ENCODE measurements at regions of chr10 and their contacts with region 1.

Region 1: DNA sequence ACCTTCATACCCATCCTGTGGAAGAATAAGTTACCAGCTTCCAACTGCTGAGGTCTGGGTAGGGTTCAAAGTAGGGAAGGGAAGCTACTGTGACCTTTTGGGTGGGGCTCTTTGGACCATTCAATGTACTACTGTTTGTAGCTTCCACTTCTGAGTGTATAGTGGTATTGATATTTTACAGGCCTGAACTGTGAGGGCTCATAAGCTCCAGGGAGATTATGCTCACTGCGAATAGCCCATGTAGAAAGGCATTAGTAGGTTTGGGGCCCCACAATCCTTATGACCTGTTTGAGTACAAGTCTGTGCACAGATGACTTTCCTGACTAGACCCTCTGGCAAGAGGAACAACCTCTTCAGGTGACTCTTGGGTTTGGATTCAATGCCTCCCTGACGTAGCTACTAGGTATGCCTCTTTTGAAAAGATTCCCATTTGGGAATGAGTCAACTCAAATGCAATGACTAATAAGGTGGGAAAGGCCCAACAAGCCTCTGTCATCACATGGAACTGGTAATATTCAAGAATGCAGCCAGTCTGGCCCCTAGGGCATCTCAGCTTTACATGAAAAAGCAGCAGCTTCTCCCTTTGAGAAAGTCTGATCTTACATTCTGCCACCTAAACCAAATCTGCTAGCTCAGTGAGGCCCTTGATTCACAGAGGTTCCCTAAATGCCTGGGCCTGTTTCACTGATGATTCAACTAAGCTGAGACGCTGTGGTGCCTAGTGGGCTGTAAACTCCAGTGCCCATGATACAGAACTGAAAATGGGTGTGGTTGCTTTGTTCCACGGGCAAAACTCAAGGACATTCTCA is 79.8 kb downstream of the ABI1 start:
- H3K4me3 Mint-ChIP-seq: no peak overlapping the region
- H3K27ac Mint-ChIP-seq: peak overlapping the region; percentile 88
- H3K4me1 Mint-ChIP-seq: peaks cover 63% of the 10 kb centered on the region
- H3K27me3 Mint-ChIP-seq: no peaks in the 10 kb centered on the region

Region 2: GRCh38 chr10:26737730-26738129 is 43.3 kb before region 1 on chr10:
- intact Hi-C with region 1: loop called (anchors 5 kb)
- H3K4me3 Mint-ChIP-seq: no peak overlapping the region
- H3K27ac Mint-ChIP-seq: peak overlapping the region; percentile 89
- H3K4me1 Mint-ChIP-seq: peaks cover 42% of the 10 kb centered on the region
- H3K27me3 Mint-ChIP-seq: no peaks in the 10 kb centered on the region